Natural killer cell (primary cell): ENCODE measurements at regions of chr6 and their contacts with region 1.

Region 1: DNA sequence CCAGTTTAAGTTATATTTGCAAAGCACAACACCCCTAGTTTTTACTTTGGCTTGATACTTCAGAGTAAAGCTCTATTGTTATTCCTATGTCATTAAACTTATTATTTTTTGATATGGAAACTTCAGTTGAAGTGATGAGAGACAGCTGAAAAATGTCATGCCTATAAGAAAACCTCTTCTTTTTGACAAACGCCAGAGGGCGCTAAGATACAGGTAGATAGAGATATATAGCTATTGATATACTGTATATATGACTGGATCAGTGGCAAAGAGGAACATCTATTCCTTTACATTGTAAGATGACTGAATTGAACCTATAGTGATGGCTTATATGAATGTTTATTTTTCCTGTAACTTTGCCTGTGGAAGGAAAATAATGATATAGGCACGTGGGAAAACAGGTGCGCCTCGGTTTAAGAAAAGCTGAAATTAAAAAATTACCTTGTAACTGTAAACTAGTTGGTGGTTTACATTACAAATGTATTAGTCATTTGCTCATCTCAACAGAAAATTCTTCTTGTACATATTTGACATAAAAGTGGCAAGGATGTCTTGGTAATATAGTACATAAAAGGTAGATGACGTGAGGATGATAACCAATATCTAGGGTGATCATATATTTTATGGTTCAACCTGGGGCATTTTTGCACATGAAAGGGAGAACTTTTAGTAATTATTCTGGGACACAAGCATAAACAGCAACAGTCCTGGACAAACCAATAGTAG is 74.1 kb downstream of the LAMA4 start:
- DNase-seq: peak in 1 of 2 donors; percentile 89
- ATAC-seq: peak; percentile 68 to 79 (median 70)
- H3K4me3 ChIP-seq: no peak overlapping the region
- H3K4me3 Mint-ChIP-seq: no peak overlapping the region
- H3K27ac ChIP-seq: no peak overlapping the region
- H3K27ac Mint-ChIP-seq: no peak overlapping the region
- H3K4me1 ChIP-seq: no peaks in the 10 kb centered on the region
- H3K4me1 Mint-ChIP-seq: no peaks in the 10 kb centered on the region
- H3K27me3 ChIP-seq: peaks cover 4% of the 10 kb centered on the region
- H3K27me3 Mint-ChIP-seq: peaks cover 44 to 78% of the 10 kb centered on the region in 2 donors
- CTCF ChIP-seq: peak; percentile 97

Region 2: DNA sequence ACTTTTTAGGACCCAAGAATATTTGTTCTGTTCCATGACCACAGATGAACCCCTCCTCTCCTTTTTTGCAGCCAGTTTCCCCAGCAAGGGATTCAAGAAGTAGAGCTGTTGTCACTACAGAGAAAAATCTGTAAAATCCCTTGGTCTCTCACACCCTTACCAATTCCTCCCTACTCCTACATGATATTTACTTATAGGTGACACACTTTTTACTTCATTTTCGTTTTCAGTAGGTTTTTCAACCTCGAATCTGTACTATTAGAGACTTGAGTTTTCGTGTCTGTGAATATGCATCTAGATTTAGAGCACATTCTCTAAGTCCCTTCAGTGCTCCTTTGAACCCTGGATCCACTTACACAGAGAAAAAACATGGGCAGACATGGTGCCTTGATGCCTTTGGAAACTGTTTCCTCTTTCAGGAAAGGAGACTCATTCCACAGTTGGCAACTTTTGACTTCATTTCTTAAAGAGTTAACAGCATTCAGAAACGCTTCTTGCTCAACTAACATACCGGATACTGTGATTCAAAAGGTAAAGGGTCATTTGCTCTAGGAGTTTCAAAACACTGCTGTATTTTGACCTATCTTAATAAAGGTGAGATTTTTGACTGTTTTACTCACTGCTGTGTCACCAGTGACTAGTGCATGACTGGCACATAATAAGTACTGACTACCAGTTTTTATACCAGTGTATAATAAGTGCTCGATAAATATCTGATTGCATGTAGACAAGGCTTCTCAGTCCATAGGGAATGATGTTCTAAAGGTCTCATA is 23.5 kb after region 1 on chr6:
- intact Hi-C with region 1: no loop called
- DNase-seq: no peak
- ATAC-seq: peak in 1 of 3 donors; percentile 78
- H3K4me3 ChIP-seq: no peak overlapping the region
- H3K4me3 Mint-ChIP-seq: no peak overlapping the region
- H3K27ac ChIP-seq: no peak overlapping the region
- H3K27ac Mint-ChIP-seq: peak overlapping the region in 1 of 2 donors; percentile 69
- H3K4me1 ChIP-seq: no peaks in the 10 kb centered on the region
- H3K4me1 Mint-ChIP-seq: peaks cover 0 to 13% of the 10 kb centered on the region in 2 donors
- H3K27me3 ChIP-seq: peaks cover 6% of the 10 kb centered on the region
- H3K27me3 Mint-ChIP-seq: peaks cover 14 to 75% of the 10 kb centered on the region in 2 donors
- CTCF ChIP-seq: no peak

Region 3: DNA sequence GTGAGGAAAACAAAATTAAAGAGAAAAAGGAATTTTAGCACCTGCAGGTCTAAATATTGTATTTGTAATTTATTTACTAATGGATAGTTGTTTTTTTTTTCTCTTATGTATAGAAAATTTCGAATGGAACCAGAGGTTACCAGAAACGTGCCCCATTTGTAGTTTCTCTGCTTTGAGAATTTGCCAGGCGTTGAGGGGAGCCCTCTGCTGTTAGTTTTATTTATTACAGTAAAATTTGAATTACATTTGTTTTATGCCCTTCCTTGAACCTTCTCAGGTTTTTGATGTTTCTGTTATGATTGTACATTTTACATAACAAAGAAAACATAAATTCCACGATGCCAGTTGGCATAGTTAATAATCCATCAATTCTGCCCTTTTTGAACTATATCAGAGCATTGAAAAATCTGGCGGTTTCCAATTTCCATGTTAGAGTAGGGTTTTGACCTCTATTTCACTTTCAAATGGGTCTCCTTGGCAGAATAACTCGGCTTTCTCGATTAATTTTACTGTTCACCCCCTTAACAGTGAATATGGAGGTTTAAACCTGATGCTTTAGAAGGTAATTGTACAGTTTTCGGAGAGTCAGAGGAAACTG is 131.8 kb after region 1 on chr6:
- intact Hi-C with region 1: loop called (anchors 1 kb)
- DNase-seq: peak in 1 of 2 donors; percentile 55
- ATAC-seq: peak in 2 of 3 donors; percentile 36 to 54
- H3K4me3 ChIP-seq: no peak overlapping the region
- H3K4me3 Mint-ChIP-seq: no peak overlapping the region
- H3K27ac ChIP-seq: no peak overlapping the region
- H3K27ac Mint-ChIP-seq: no peak overlapping the region
- H3K4me1 ChIP-seq: no peaks in the 10 kb centered on the region
- H3K4me1 Mint-ChIP-seq: no peaks in the 10 kb centered on the region
- H3K27me3 ChIP-seq: peaks cover 8% of the 10 kb centered on the region
- H3K27me3 Mint-ChIP-seq: peaks cover 30 to 50% of the 10 kb centered on the region in 2 donors
- CTCF ChIP-seq: peak; percentile 78

Region 4: DNA sequence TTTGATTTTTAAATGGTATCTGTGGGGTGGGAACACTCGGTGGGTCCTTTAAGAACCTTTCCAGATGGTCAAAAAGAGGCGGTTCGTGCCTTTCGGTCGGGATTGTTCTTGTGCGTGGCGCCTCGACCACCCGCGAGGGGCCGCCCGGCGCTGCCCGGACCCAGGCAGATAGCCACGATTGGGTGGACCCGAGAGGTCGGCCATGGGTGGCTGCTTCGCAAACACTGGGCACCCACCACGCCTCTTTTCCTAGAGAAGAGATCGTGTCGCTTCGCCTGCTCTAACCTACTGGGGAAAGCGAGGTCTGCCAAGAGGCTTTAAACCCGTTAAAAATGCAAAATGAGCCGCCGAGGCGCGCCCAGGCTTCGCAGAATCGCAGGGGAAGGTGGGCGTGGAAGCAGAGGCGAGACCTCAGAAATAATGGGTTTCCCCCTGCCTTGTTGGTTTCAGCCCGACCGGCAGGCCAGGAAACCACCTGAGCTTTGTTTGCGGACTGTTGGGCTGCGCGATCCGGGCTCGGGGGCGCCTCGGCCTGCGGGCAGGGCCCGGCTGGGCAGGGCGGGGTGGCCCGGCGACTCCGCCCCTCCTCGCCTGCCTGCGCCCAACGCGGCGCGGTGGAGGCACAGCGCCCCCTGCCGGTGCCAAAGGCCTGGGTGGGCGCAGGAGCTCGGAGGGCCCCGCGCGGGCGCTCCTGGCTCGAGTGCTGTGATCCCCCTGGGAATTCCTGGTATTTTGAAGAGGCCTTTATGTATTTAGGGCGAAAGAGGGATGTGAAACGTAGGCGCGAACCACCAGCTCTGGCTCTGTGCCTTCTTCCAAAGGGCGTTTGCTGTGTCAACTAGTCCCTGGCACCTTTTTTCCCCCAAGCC is 1678.5 kb after region 1 on chr6:
- intact Hi-C with region 1: loop called (anchors 2 kb)
- DNase-seq: peak; percentile 77 to 85
- ATAC-seq: peak; percentile 88 to 95 (median 90)
- H3K4me3 ChIP-seq: peak overlapping the region; percentile 51
- H3K4me3 Mint-ChIP-seq: peak overlapping the region; percentile 9
- H3K27ac ChIP-seq: peak overlapping the region; percentile 78
- H3K27ac Mint-ChIP-seq: peak overlapping the region in 1 of 2 donors; percentile 48
- H3K4me1 ChIP-seq: peaks cover 48% of the 10 kb centered on the region
- H3K4me1 Mint-ChIP-seq: peaks cover 5 to 6% of the 10 kb centered on the region in 2 donors
- H3K27me3 ChIP-seq: peaks cover 53% of the 10 kb centered on the region
- H3K27me3 Mint-ChIP-seq: peaks cover 26 to 36% of the 10 kb centered on the region in 2 donors
- CTCF ChIP-seq: peak; percentile 79

Region 5: DNA sequence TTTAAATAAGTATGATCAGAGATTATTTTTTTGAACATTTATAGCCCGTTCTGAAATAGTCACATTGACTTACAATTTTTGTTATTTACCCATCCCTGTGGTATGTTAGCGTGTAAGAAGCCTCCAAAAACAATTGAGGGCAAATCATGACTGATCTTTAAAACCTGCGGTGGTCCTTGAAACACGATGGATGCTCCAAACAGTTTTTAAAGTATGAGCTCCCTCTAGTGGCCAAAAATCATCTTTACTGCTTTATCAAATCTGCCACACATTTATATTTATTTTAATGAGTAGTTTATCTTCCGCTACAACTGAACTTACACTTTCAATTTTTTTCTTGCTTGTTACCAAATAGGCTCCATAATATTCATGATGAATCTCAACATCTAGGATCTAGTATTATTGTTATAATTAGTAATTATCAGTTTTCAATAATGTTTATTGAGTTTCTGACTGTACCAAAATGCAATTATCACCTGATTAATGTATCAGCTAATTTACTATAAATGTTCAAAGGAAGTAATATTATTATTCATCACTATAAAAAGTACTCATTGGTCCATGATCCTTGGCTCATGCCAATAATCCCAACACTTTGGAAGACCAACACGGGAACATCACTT is 1729.1 kb after region 1 on chr6:
- intact Hi-C with region 1: loop called (anchors 5 kb)
- DNase-seq: peak in 1 of 2 donors; percentile 67
- ATAC-seq: peak in 2 of 3 donors; percentile 40 to 63
- H3K4me3 ChIP-seq: no peak overlapping the region
- H3K4me3 Mint-ChIP-seq: no peak overlapping the region
- H3K27ac ChIP-seq: no peak overlapping the region
- H3K27ac Mint-ChIP-seq: no peak overlapping the region
- H3K4me1 ChIP-seq: no peaks in the 10 kb centered on the region
- H3K4me1 Mint-ChIP-seq: no peaks in the 10 kb centered on the region
- H3K27me3 ChIP-seq: no peaks in the 10 kb centered on the region
- H3K27me3 Mint-ChIP-seq: peaks cover 0 to 12% of the 10 kb centered on the region in 2 donors
- CTCF ChIP-seq: peak; percentile 88